Naive thymus-derived CD4-positive, alpha-beta T cell (primary cell): ENCODE measurements at regions of chr1 and their contacts with region 1.

Region 1: DNA sequence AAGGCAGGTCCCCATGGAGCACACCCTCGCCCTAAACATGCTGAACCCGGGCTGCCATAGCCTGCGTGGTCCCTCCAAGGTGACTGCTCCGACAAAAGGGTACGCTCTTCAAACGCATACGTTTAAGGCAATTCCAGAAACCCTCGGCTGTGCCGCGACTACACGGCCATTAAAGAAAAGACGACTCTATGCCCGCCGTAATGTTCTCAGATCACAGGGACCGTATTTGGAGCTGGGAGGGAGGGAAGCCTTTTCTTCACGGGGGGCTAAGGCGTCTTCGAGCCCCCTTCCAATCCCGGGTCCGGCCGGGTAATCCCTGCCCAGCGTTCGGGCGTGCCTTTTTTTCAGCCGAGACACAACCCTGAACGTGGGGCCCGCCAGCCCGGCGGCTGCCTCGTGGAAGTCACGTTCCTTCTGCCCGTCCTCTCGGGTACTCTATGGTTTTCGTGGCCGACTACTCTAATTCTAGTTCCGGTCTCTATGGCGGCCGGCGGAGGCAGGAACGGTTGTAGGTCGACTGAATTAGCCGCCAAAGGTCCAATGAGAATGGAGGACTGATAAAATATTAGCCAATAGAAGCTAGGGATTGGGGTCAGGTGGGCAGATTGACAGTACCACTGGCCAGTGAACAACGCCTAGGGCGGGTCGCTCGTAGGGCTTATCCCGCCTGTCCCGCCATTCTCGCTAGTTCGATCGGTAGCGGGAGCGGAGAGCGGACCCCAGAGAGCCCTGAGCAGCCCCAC is at the start of gene YBX1:
- DNase-seq: peak; percentile 85 to 98 (median 97)
- ATAC-seq: peak; percentile 94
- H3K4me3 ChIP-seq: peak within 1 kb of the TSS; percentile 74
- H3K4me3 Mint-ChIP-seq: peak within 1 kb of the TSS; percentile 95 to 99 (median 98)
- H3K27ac ChIP-seq: peak within 1 kb of the TSS; percentile 82
- H3K27ac Mint-ChIP-seq: peak within 1 kb of the TSS; percentile 93 to 98 (median 97)
- H3K4me1 ChIP-seq: peaks cover 35 to 47% of the 10 kb centered on the region in 2 donors
- H3K4me1 Mint-ChIP-seq: peaks cover 42 to 66% (median 54%) of the 10 kb centered on the region in 7 donors
- H3K27me3 ChIP-seq: no peaks in the 10 kb centered on the region
- H3K27me3 Mint-ChIP-seq: no peaks in the 10 kb centered on the region
- total RNA-seq, gene YBX1: 277 to 471 (median 287) TPM

Region 2: DNA sequence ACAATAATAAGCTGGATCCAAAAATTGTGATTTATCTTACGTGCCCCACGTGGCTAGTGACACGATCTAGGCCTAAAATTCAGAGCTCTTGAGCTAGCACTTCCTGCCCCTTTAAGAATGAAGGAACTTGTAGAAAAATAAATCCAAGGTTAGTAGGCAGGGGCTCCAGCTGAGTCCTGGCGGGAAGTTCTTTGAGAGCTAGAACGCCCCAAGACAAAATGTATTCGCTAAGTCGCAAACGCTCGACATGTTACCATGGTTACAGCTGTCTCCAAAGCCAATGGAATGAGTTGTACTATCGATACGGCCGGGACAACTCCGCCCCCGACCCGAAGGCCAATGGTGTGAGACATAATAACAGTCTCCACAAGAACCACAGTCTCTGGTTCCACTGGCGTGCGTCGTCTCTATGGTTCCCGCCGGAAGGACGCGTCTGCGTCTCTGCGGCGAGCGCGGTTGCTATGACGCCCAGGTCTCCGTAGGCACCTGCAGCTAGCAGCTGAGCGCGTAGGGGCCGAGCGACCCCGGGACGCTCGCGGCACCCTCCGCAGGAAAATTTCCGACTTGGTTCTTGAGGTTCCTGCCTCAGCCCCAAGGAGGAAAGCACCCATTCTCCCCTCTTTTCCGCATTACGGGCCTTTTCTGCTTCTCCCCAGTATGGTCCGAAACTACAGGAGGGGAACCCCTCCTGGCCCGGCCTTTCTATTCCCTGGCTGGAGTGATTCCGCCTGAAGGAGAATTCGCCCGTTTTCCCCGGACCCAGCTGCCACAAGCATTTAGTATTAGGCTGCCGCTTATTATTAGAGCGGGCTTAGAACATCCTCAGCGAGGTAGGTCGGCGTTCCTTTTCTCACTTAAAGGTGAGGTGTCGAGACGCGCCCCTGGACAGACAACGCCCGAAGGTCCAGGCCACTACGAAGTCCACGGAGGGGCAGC is 218.8 kb before region 1 on chr1 and contains the start of gene CCDC30:
- CTCF ChIA-PET with region 1: no interaction called
- POLR2A ChIA-PET with region 1: interaction called, 17 read pairs
- intact Hi-C with region 1: loop called (anchors 1 kb)
- DNase-seq: peak; percentile 75 to 99 (median 98)
- ATAC-seq: peak; percentile 99
- H3K4me3 ChIP-seq: peak within 1 kb of the TSS; percentile 50
- H3K4me3 Mint-ChIP-seq: peak within 1 kb of the TSS; percentile 74 to 92 (median 86)
- H3K27ac ChIP-seq: peak within 1 kb of the TSS; percentile 86
- H3K27ac Mint-ChIP-seq: peak within 1 kb of the TSS; percentile 87 to 98 (median 93)
- H3K4me1 ChIP-seq: peaks cover 14 to 18% of the 10 kb centered on the region in 2 donors
- H3K4me1 Mint-ChIP-seq: peaks cover 14 to 57% (median 49%) of the 10 kb centered on the region in 7 donors
- H3K27me3 ChIP-seq: no peaks in the 10 kb centered on the region
- H3K27me3 Mint-ChIP-seq: peaks cover 0 to 20% (median 0%) of the 10 kb centered on the region in 5 donors
- total RNA-seq, gene CCDC30: 2.3 to 5.3 (median 4.2) TPM

Region 3: GRCh38 chr1:42657971-42658879 is 23.7 kb before region 1 on chr1 and contains the start of gene PPIH:
- CTCF ChIA-PET with region 1: interaction called, 6 read pairs
- POLR2A ChIA-PET with region 1: interaction called, 85 read pairs
- intact Hi-C with region 1: loop called (anchors 1 kb)
- DNase-seq: peak; percentile 82 to 94 (median 92)
- ATAC-seq: peak; percentile 99
- H3K4me3 ChIP-seq: peak within 1 kb of the TSS; percentile 90
- H3K4me3 Mint-ChIP-seq: peak within 1 kb of the TSS; percentile 94 to 99 (median 99)
- H3K27ac ChIP-seq: peak within 1 kb of the TSS; percentile 75
- H3K27ac Mint-ChIP-seq: peak within 1 kb of the TSS; percentile 84 to 98 (median 96)
- H3K4me1 ChIP-seq: peaks cover 17 to 22% of the 10 kb centered on the region in 2 donors
- H3K4me1 Mint-ChIP-seq: peaks cover 20 to 48% (median 44%) of the 10 kb centered on the region in 7 donors
- H3K27me3 ChIP-seq: no peaks in the 10 kb centered on the region
- H3K27me3 Mint-ChIP-seq: peaks cover 0 to 3% (median 0%) of the 10 kb centered on the region in 5 donors
- total RNA-seq, gene PPIH: 28.0 to 76.8 (median 40.7) TPM

Region 4: DNA sequence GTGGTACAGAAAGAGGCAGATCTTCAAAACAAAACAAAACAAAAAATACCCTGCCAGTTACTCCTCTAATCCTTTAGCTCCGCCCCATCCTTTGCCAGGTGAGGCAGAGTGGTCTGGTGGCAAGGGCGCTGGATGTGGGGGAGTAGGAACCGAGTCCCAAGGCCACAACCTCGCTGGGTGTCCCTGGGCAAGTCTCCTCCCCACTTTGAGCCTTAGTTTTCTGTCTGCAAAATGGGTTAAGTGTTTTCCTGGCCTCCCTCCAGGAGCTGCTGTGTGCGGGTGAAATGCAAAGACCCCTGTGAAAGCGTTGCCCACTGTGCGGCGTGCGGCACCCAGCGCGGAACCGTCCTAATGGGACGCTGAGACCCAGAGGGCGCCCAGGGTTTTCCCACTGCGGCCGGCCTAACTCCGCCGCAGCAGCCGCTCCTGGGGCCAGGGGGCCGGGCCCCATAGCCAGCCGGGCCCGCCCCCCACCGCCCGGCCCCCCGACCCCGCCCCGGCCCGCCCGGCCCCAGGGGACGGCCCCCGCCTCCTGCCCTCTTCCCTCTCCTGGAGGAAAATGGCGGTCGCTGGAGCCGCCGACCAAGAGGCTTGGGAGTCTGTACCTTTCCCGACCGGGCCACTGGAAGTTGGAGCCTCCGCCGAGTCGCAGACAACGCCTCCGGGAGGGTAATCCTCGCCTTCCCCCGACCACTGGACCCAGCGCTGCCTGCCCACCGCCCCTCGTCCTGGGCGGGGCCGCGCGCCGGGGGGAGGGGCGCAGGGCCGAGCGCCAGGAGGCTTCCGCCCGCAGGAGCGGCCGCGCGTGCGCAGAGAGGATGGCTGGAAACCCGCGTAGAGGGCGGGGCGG is 134.9 kb after region 1 on chr1 and contains the starts of genes ERMAP and SVBP:
- CTCF ChIA-PET with region 1: no interaction called
- POLR2A ChIA-PET with region 1: interaction called, 12 read pairs
- intact Hi-C with region 1: loop called (anchors 1 kb)
- DNase-seq: peak; percentile 86 to 98 (median 91)
- ATAC-seq: peak; percentile 97
- H3K4me3 ChIP-seq: peak within 1 kb of the TSS; percentile 69
- H3K4me3 Mint-ChIP-seq: peak within 1 kb of the TSS; percentile 76 to 90 (median 84)
- H3K27ac ChIP-seq: peak within 1 kb of the TSS; percentile 89
- H3K27ac Mint-ChIP-seq: peak within 1 kb of the TSS; percentile 64 to 94 (median 86)
- H3K4me1 ChIP-seq: peaks cover 6 to 10% of the 10 kb centered on the region in 2 donors
- H3K4me1 Mint-ChIP-seq: peaks cover 19 to 35% (median 29%) of the 10 kb centered on the region in 7 donors
- H3K27me3 ChIP-seq: no peaks in the 10 kb centered on the region
- H3K27me3 Mint-ChIP-seq: peaks cover 0 to 10% (median 0%) of the 10 kb centered on the region in 5 donors
- total RNA-seq, gene ERMAP: 6.1 to 10.3 (median 6.7) TPM
- total RNA-seq, gene SVBP: 12.7 to 22.2 (median 17.8) TPM

Region 5: GRCh38 chr1:42877380-42877779 is 195.5 kb after region 1 on chr1:
- CTCF ChIA-PET with region 1: no interaction called
- POLR2A ChIA-PET with region 1: no interaction called
- intact Hi-C with region 1: no loop called
- DNase-seq: no peak
- ATAC-seq: no peak
- H3K4me3 ChIP-seq: no peak overlapping the region
- H3K4me3 Mint-ChIP-seq: no peak overlapping the region
- H3K27ac ChIP-seq: no peak overlapping the region
- H3K27ac Mint-ChIP-seq: no peak overlapping the region
- H3K4me1 ChIP-seq: no peaks in the 10 kb centered on the region
- H3K4me1 Mint-ChIP-seq: peaks cover 0 to 2% (median 0%) of the 10 kb centered on the region in 7 donors
- H3K27me3 ChIP-seq: no peaks in the 10 kb centered on the region
- H3K27me3 Mint-ChIP-seq: peaks cover 0 to 31% (median 3%) of the 10 kb centered on the region in 5 donors

Region 6: GRCh38 chr1:43367904-43368645 is 686.2 kb after region 1 on chr1 and contains the start of gene ELOVL1:
- CTCF ChIA-PET with region 1: no interaction called
- POLR2A ChIA-PET with region 1: no interaction called
- intact Hi-C with region 1: loop called in 1 of 2 experiments (anchors 2 kb)
- DNase-seq: peak; percentile 40 to 94 (median 58)
- ATAC-seq: peak; percentile 91
- H3K4me3 ChIP-seq: peak within 1 kb of the TSS; percentile 89
- H3K4me3 Mint-ChIP-seq: peak within 1 kb of the TSS; percentile 86 to 97 (median 92)
- H3K27ac ChIP-seq: peak within 1 kb of the TSS; percentile 90
- H3K27ac Mint-ChIP-seq: peak within 1 kb of the TSS; percentile 88 to 95 (median 91)
- H3K4me1 ChIP-seq: peaks cover 13 to 22% of the 10 kb centered on the region in 2 donors
- H3K4me1 Mint-ChIP-seq: peaks cover 24 to 47% (median 42%) of the 10 kb centered on the region in 7 donors
- H3K27me3 ChIP-seq: no peaks in the 10 kb centered on the region
- H3K27me3 Mint-ChIP-seq: no peaks in the 10 kb centered on the region
- total RNA-seq, gene ELOVL1: 25.9 to 65.3 (median 32.3) TPM